Left cardiac atrium (tissue), 4 donors: ENCODE measurements at regions of chr1 and their contacts with region 1.

Region 1: DNA sequence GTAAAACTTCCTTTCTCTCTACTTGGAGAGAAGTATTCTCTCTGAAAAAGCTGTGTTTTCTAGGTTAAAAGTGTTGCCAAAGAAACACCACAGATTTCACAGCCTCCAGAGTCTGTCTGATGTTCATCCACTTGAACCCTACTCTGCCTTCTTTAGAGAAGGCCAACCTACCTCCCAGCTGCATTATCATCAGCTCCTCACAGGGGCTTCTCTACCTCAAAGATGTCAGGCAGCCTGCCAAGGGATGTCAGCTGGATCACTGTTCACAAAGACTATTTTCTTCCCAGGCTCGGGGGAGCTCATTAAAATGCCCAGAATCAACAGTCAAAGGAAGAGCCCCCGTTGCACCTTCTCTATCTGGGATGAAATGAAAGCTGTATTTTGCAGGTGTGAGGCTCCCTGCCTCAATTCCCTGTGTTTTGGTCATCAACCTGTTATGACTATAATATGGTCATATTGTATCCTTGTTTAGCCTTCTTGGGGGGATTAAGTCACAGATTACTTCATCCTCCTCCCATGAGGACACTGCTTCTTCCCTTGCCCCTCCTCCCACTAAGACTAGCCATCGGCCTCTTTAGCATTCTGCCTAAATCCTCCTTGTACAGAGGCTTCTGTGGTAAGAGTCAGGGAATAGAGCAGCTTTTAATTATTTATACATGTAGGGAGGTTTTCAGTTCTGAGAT is 25.7 kb downstream of the ANGPTL7 start:
- DNase-seq: no peak
- ATAC-seq: no peak

Region 2: GRCh38 chr1:11099310-11100149 is 115.3 kb before region 1 on chr1 and contains the start of gene EXOSC10:
- intact Hi-C with region 1: loop called in 1 of 2 experiments (anchors 10 kb)
- DNase-seq: peak; percentile 95
- ATAC-seq: peak; percentile 98 to 99
- total RNA-seq, gene EXOSC10: 19.8 to 26.6 TPM

Region 3: GRCh38 chr1:11364170-11364569 is 149.3 kb after region 1 on chr1:
- intact Hi-C with region 1: no loop called
- DNase-seq: no peak
- ATAC-seq: no peak